Gastrocnemius medialis (tissue), 4 donors: ENCODE measurements at regions of chr16 and their contacts with region 1.

Region 1: GRCh38 chr16:14249291-14250032 is 178.3 kb downstream of the MRTFB start:
- DNase-seq: peak in 1 of 2 donors; percentile 30
- ATAC-seq: peak; percentile 40 to 63
- H3K4me3 ChIP-seq: no peak overlapping the region
- H3K27ac ChIP-seq: peak overlapping the region; percentile 12 to 45 (median 27)
- H3K4me1 ChIP-seq: peaks cover 0 to 3% of the 10 kb centered on the region in 2 donors
- H3K27me3 ChIP-seq: no peaks in the 10 kb centered on the region
- CTCF ChIP-seq: peak; percentile 68 to 86 (median 72)
- POLR2A ChIP-seq: no peak

Region 2: GRCh38 chr16:14132696-14133048 is 116.8 kb before region 1 on chr16:
- in situ Hi-C with region 1: no loop called
- intact Hi-C with region 1: no loop called
- DNase-seq: no peak
- ATAC-seq: peak in 1 of 2 donors; percentile 46
- H3K4me3 ChIP-seq: no peak overlapping the region
- H3K27ac ChIP-seq: no peak overlapping the region
- H3K4me1 ChIP-seq: peaks cover 6 to 8% of the 10 kb centered on the region in 2 donors
- H3K27me3 ChIP-seq: no peaks in the 10 kb centered on the region
- CTCF ChIP-seq: no peak
- POLR2A ChIP-seq: no peak

Region 3: GRCh38 chr16:14539631-14540030 is 290.2 kb after region 1 on chr16:
- in situ Hi-C with region 1: loop called in 2 of 4 experiments (anchors 10 kb)
- intact Hi-C with region 1: no loop called
- DNase-seq: no peak
- ATAC-seq: no peak
- H3K4me3 ChIP-seq: no peak overlapping the region
- H3K27ac ChIP-seq: no peak overlapping the region
- H3K4me1 ChIP-seq: no peaks in the 10 kb centered on the region
- H3K27me3 ChIP-seq: no peaks in the 10 kb centered on the region
- CTCF ChIP-seq: no peak
- POLR2A ChIP-seq: no peak